ENCODE measurements at regions of chr10 and their contacts with region 1.

Region 1: DNA sequence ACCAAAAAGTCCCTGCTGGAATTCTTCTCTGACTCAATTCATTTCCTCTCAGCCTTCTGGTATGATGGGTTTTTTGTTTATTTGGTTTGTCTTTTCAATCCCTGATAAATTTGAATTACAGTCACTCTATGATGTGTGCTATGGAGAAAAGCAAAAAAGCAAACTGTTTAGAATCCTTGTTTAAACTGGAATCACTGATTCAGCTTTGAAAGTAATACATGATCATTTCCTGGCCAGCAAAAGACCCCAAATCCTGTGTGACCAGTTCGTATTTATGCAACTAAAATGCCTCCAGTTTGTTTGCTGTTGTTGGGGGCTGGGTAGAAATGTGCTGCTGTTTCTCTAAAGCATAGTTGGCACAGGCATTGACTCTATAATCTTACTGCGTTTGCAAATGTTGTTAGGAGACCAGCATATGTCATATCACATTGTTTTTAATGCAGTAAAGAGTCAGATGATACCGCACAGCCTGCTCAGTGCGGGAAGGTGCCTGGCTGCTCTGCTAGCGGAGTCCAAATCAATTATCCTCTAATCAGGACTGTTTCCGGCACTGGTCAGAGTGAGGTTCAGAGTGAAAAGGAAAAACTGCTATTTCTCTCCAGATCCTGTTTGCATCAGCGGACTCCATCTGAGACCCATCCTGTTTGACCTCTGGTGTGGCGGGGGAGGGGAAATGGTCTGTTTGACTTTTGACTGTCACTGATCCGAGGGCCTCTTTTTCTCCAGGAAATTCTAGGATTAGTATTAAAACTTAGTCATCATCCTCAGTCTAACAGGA is 40.6 kb upstream of the ADD3 start:
- DNase-seq: peak; percentile 88
- ATAC-seq: peak; percentile 57
- H3K4me3 ChIP-seq: peak overlapping the region; percentile 10; the same call in 1 of the 2 replicates
- H3K27ac ChIP-seq: peak overlapping the region; percentile 97
- H3K4me1 ChIP-seq: peaks cover 25% of the 10 kb centered on the region
- H3K27me3 ChIP-seq: no peaks in the 10 kb centered on the region
- CTCF ChIP-seq: no peak
- POLR2A ChIP-seq: no peak
- RAD21 ChIP-seq: peak; percentile 26

Region 2: DNA sequence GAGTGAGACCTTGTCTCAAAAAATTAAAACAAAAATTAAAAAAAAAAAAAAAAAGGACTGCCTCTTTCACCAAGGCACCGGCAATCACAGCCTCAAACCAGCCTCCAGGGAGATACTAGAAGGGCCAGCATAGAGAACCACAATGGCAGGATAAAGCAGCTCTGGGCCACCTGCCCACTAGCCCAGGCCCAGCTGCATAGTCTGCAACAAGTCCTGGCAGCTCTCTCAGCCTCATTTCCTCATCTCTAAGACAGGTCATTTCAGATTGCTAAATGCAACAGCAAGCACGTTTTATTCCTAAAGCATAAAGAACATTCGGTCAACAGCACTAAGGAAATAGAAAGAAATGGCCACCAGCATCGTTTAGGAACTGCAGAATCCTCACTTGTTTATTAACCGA is 72.6 kb before region 1 on chr10:
- CTCF ChIA-PET with region 1: no interaction called
- POLR2A ChIA-PET with region 1: no interaction called
- dilution Hi-C with region 1: no loop called
- in situ Hi-C with region 1: no loop called
- intact Hi-C with region 1: loop called (anchors 5 kb)
- DNase-seq: peak; percentile 88
- ATAC-seq: peak; percentile 25
- H3K4me3 ChIP-seq: no peak overlapping the region
- H3K27ac ChIP-seq: no peak overlapping the region; the same call in 1 of the 2 replicates
- H3K4me1 ChIP-seq: peaks cover 26% of the 10 kb centered on the region
- H3K27me3 ChIP-seq: no peaks in the 10 kb centered on the region
- CTCF ChIP-seq: no peak
- POLR2A ChIP-seq: no peak
- RAD21 ChIP-seq: no peak

Region 3: GRCh38 chr10:109978481-109978880 is 11.3 kb after region 1 on chr10:
- CTCF ChIA-PET with region 1: interaction called, 15 read pairs
- POLR2A ChIA-PET with region 1: no interaction called
- dilution Hi-C with region 1: no loop called
- in situ Hi-C with region 1: no loop called
- intact Hi-C with region 1: loop called (anchors 2 kb)
- DNase-seq: peak; percentile 57
- ATAC-seq: peak; percentile 56; the same call in 1 of the 2 replicates
- H3K4me3 ChIP-seq: no peak overlapping the region
- H3K27ac ChIP-seq: no peak overlapping the region
- H3K4me1 ChIP-seq: peaks cover 4% of the 10 kb centered on the region; the same call in 1 of the 2 replicates
- H3K27me3 ChIP-seq: no peaks in the 10 kb centered on the region
- CTCF ChIP-seq: peak; percentile 66
- POLR2A ChIP-seq: no peak
- RAD21 ChIP-seq: peak; percentile 60

Region 4: GRCh38 chr10:110074758-110075671 is 107.9 kb after region 1 on chr10:
- CTCF ChIA-PET with region 1: no interaction called
- POLR2A ChIA-PET with region 1: no interaction called
- dilution Hi-C with region 1: no loop called
- in situ Hi-C with region 1: no loop called
- intact Hi-C with region 1: loop called (anchors 2 kb)
- DNase-seq: peak; percentile 94
- ATAC-seq: peak; percentile 81
- H3K4me3 ChIP-seq: no peak overlapping the region
- H3K27ac ChIP-seq: peak overlapping the region; percentile 20; the same call in 1 of the 2 replicates
- H3K4me1 ChIP-seq: peaks cover 17% of the 10 kb centered on the region
- H3K27me3 ChIP-seq: no peaks in the 10 kb centered on the region
- CTCF ChIP-seq: no peak
- POLR2A ChIP-seq: no peak
- RAD21 ChIP-seq: no peak

Region 5: GRCh38 chr10:110113670-110114337 is 146.7 kb after region 1 on chr10:
- CTCF ChIA-PET with region 1: no interaction called
- POLR2A ChIA-PET with region 1: no interaction called
- dilution Hi-C with region 1: no loop called
- in situ Hi-C with region 1: no loop called
- intact Hi-C with region 1: no loop called
- DNase-seq: no peak
- ATAC-seq: no peak
- H3K4me3 ChIP-seq: no peak overlapping the region
- H3K27ac ChIP-seq: no peak overlapping the region
- H3K4me1 ChIP-seq: no peaks in the 10 kb centered on the region
- H3K27me3 ChIP-seq: no peaks in the 10 kb centered on the region
- CTCF ChIP-seq: no peak
- POLR2A ChIP-seq: no peak
- RAD21 ChIP-seq: no peak

Measured in IMR-90 (cell line).